Caco-2 (cell line): ENCODE measurements at regions of chr16 and their contacts with region 1.

Region 1: GRCh38 chr16:23149349-23149996 is at the start of gene USP31:
- DNase-seq: peak; percentile 94 to 95
- H3K4me3 ChIP-seq: peak within 1 kb of the TSS; percentile 67
- H3K4me3 Mint-ChIP-seq: peak within 1 kb of the TSS; percentile 92
- H3K27ac Mint-ChIP-seq: peak within 1 kb of the TSS; percentile 79
- H3K4me1 ChIP-seq: peaks cover 8% of the 10 kb centered on the region
- H3K4me1 Mint-ChIP-seq: no peaks in the 10 kb centered on the region
- H3K27me3 ChIP-seq: no peaks in the 10 kb centered on the region
- H3K27me3 Mint-ChIP-seq: no peaks in the 10 kb centered on the region
- CTCF ChIP-seq: no peak
- total RNA-seq, gene USP31: 11.3 and 11.9 TPM in 2 replicates

Region 2: GRCh38 chr16:23081675-23082119 is 67.8 kb before region 1 on chr16:
- CTCF ChIA-PET with region 1: no interaction called
- POLR2A ChIA-PET with region 1: no interaction called
- intact Hi-C with region 1: loop called (anchors 5 kb)
- DNase-seq: no peak
- H3K4me3 ChIP-seq: no peak overlapping the region
- H3K4me3 Mint-ChIP-seq: no peak overlapping the region
- H3K27ac Mint-ChIP-seq: no peak overlapping the region
- H3K4me1 ChIP-seq: no peaks in the 10 kb centered on the region
- H3K4me1 Mint-ChIP-seq: no peaks in the 10 kb centered on the region
- H3K27me3 ChIP-seq: no peaks in the 10 kb centered on the region
- H3K27me3 Mint-ChIP-seq: no peaks in the 10 kb centered on the region
- CTCF ChIP-seq: no peak

Region 3: GRCh38 chr16:23254338-23254737 is 104.9 kb after region 1 on chr16:
- CTCF ChIA-PET with region 1: no interaction called
- POLR2A ChIA-PET with region 1: no interaction called
- intact Hi-C with region 1: no loop called
- DNase-seq: no peak
- H3K4me3 ChIP-seq: no peak overlapping the region
- H3K4me3 Mint-ChIP-seq: no peak overlapping the region
- H3K27ac Mint-ChIP-seq: no peak overlapping the region
- H3K4me1 ChIP-seq: no peaks in the 10 kb centered on the region
- H3K4me1 Mint-ChIP-seq: peaks cover 19% of the 10 kb centered on the region
- H3K27me3 ChIP-seq: no peaks in the 10 kb centered on the region
- H3K27me3 Mint-ChIP-seq: peaks cover 3% of the 10 kb centered on the region
- CTCF ChIP-seq: no peak